ENCODE measurements at regions of chr19 and their contacts with region 1.

Region 1: GRCh38 chr19:33778089-33778791 is 18.4 kb upstream of the KCTD15 start:
- DNase-seq: peak; percentile 87 to 96 (median 94)
- ATAC-seq: peak; percentile 97
- H3K4me3 ChIP-seq: no peak overlapping the region
- H3K27ac ChIP-seq: no peak overlapping the region
- H3K4me1 ChIP-seq: peaks cover 0 to 24% of the 10 kb centered on the region in 2 experiments; a peak in 2 of 5 replicates
- H3K27me3 ChIP-seq: peaks cover 16 to 42% of the 10 kb centered on the region in 2 experiments; a peak in 4 of 5 replicates
- CTCF ChIP-seq: peak; percentile 100
- EP300 ChIP-seq: no peak
- POLR2A ChIP-seq: no peak
- RAD21 ChIP-seq: peak; percentile 99 to 100

Region 2: GRCh38 chr19:33998739-33999345 is 220.6 kb after region 1 on chr19:
- CTCF ChIA-PET with region 1: interaction called, 33 read pairs
- POLR2A ChIA-PET with region 1: no interaction called
- in situ Hi-C with region 1: no loop called
- intact Hi-C with region 1: no loop called
- DNase-seq: no peak
- ATAC-seq: no peak
- H3K4me3 ChIP-seq: no peak overlapping the region
- H3K27ac ChIP-seq: no peak overlapping the region
- H3K4me1 ChIP-seq: no peaks in the 10 kb centered on the region
- H3K27me3 ChIP-seq: peaks cover 3 to 4% of the 10 kb centered on the region in 2 experiments; a peak in 2 of 5 replicates
- CTCF ChIP-seq: peak in 1 of 3 experiments; percentile 46; a peak in 3 of 6 replicates
- EP300 ChIP-seq: no peak
- POLR2A ChIP-seq: no peak
- RAD21 ChIP-seq: peak in 1 of 2 experiments; percentile 11; a peak in 1 of 4 replicates

Region 3: GRCh38 chr19:34145741-34146202 is 367.5 kb after region 1 on chr19:
- CTCF ChIA-PET with region 1: interaction called, 54 read pairs
- POLR2A ChIA-PET with region 1: no interaction called
- in situ Hi-C with region 1: no loop called
- intact Hi-C with region 1: loop called (anchors 5 kb)
- DNase-seq: peak; percentile 61 to 73 (median 66)
- ATAC-seq: peak; percentile 85
- H3K4me3 ChIP-seq: no peak overlapping the region
- H3K27ac ChIP-seq: no peak overlapping the region
- H3K4me1 ChIP-seq: no peaks in the 10 kb centered on the region
- H3K27me3 ChIP-seq: no peaks in the 10 kb centered on the region; a peak in 2 of 5 replicates
- CTCF ChIP-seq: peak; percentile 84 to 93 (median 86)
- EP300 ChIP-seq: no peak
- POLR2A ChIP-seq: no peak
- RAD21 ChIP-seq: peak; percentile 77 to 91

Region 4: DNA sequence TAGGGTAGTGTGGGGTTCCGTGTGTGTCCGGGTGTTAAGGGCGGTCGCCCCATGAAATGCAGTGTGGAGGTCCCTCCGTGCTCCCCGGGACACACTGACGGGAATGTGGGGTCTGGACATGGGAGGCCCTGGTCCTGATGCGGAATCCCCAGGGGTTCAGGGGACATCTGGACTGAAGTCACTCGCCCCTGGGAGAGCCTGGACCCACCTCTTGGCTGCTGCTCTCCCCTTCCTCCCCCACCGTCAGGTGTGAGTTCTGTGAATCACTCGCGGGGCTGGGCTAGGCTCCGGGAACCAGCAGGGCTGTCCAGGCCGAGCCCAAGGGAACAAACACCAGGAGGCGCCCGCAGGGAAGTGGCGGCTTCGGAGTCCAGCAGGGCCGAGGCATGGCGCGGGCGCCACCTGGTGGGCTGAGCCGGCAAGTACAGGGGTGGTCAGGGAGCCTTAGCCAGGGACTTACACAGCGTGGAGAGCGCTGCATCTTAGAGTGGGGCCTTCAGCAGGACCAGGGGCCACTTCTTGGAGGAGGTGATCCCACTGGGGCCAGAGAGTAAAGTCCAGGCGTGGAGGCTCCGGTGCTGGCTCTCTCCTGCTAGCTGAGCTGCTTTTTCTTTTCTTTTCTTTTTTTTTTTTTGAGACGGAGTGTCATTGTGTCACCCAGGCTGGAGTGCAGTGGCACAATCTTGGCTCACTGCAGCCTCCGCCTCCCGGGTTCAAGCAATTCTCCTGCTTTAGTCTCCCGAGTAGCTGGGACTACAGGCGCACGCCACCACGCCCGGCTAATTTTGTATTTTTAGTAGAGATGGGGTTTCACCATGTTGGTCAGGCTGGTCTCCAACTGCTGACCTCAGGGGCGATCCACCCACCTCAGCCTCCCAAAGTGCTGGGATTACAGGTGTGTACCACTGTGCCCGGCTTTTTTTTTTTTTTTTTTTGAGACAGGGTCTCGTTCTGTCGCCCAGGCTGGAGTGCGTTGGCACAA is 723.4 kb after region 1 on chr19:
- CTCF ChIA-PET with region 1: interaction called, 27 read pairs
- POLR2A ChIA-PET with region 1: no interaction called
- in situ Hi-C with region 1: no loop called
- intact Hi-C with region 1: no loop called
- DNase-seq: peak; percentile 93 to 96 (median 95)
- ATAC-seq: peak; percentile 96
- H3K4me3 ChIP-seq: no peak overlapping the region
- H3K27ac ChIP-seq: no peak overlapping the region
- H3K4me1 ChIP-seq: peaks cover 7 to 44% of the 10 kb centered on the region in 2 experiments; a peak in 4 of 5 replicates
- H3K27me3 ChIP-seq: peaks cover 0 to 5% of the 10 kb centered on the region in 2 experiments; a peak in 2 of 5 replicates
- CTCF ChIP-seq: peak; percentile 99 to 100 (median 100)
- EP300 ChIP-seq: no peak
- POLR2A ChIP-seq: no peak
- RAD21 ChIP-seq: peak; percentile 87 to 99

Measured in K562 (cell line).